ENCODE measurements at regions of chr6 and their contacts with region 1.

Region 1: GRCh38 chr6:43143235-43144124 is 27.6 kb upstream of the SRF start:
- DNase-seq: peak; percentile 94
- H3K4me3 Mint-ChIP-seq: peak overlapping the region; percentile 24
- H3K27ac Mint-ChIP-seq: peak overlapping the region; percentile 78
- H3K4me1 Mint-ChIP-seq: peaks cover 11% of the 10 kb centered on the region
- H3K27me3 Mint-ChIP-seq: peaks cover 4% of the 10 kb centered on the region

Region 2: GRCh38 chr6:43070028-43070632 is 73.3 kb before region 1 on chr6:
- intact Hi-C with region 1: loop called (anchors 1 kb)
- DNase-seq: peak; percentile 76
- H3K4me3 Mint-ChIP-seq: no peak overlapping the region
- H3K27ac Mint-ChIP-seq: no peak overlapping the region
- H3K4me1 Mint-ChIP-seq: peaks cover 2% of the 10 kb centered on the region
- H3K27me3 Mint-ChIP-seq: peaks cover 3% of the 10 kb centered on the region